Natural killer cell (primary cell): ENCODE measurements at regions of chr17 and their contacts with region 1.

Region 1: GRCh38 chr17:31321481-31321880 is at the start of gene EVI2A:
- DNase-seq: peak; percentile 54 to 93
- ATAC-seq: peak; percentile 88 to 95 (median 92)
- H3K4me3 ChIP-seq: peak within 1 kb of the TSS; percentile 75
- H3K4me3 Mint-ChIP-seq: peak within 1 kb of the TSS; percentile 80
- H3K27ac ChIP-seq: peak within 1 kb of the TSS; percentile 93
- H3K27ac Mint-ChIP-seq: peak within 1 kb of the TSS; percentile 89 to 93
- H3K4me1 ChIP-seq: peaks cover 9% of the 10 kb centered on the region
- H3K4me1 Mint-ChIP-seq: peaks cover 33 to 37% of the 10 kb centered on the region in 2 donors
- H3K27me3 ChIP-seq: no peaks in the 10 kb centered on the region
- H3K27me3 Mint-ChIP-seq: no peaks in the 10 kb centered on the region
- CTCF ChIP-seq: no peak
- total RNA-seq, gene EVI2A: 20.9 to 33.0 (median 32.4) TPM

Region 2: DNA sequence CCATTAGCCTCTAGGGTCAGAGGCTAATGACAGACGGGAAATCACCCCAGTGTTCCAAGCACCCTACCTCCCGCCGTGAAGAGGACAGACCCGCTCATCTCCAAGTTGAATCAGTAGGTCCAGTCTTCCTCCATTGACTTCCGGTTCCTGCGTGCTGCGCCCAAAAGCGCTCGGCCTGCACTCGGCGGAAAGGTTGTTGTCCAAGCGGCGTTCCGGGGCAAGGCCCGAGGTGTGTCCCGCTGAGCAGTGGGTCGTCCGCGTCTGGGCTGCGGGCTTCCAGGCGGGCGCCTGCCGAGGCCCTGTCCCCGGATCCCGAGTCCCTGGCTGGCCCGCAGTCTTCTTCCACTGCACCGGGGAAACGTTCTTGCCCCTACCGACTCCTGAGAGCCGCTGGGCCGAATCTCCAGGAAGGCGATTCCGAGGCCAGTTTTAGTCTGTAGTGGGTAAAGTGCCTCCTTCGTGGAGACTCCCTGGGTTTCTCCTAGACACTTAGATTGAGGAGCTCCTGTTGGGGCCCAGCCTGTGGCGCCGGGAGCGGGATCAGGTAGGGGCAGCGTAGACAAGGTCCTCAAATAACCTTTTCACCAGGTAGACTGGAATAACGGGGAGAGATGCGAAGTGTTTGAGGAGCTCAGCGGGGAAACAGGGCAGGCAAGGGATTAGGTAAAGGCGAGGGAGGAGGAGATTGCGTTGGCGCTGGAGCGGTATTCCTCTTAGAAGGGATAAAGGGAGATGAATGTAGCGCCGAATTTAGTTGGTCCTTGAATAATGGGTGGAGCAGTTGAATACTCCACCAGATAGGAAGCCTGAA is 415.2 kb before region 1 on chr17 and contains the start of gene TEFM:
- intact Hi-C with region 1: no loop called
- DNase-seq: peak; percentile 89 to 91
- ATAC-seq: peak; percentile 98
- H3K4me3 ChIP-seq: peak within 1 kb of the TSS; percentile 57
- H3K4me3 Mint-ChIP-seq: peak within 1 kb of the TSS; percentile 98
- H3K27ac ChIP-seq: peak within 1 kb of the TSS; percentile 76
- H3K27ac Mint-ChIP-seq: peak within 1 kb of the TSS; percentile 93 to 94
- H3K4me1 ChIP-seq: peaks cover 20% of the 10 kb centered on the region
- H3K4me1 Mint-ChIP-seq: peaks cover 29 to 34% of the 10 kb centered on the region in 2 donors
- H3K27me3 ChIP-seq: no peaks in the 10 kb centered on the region
- H3K27me3 Mint-ChIP-seq: no peaks in the 10 kb centered on the region
- CTCF ChIP-seq: no peak
- total RNA-seq, gene TEFM: 6.3 to 12.9 (median 10.5) TPM

Region 3: DNA sequence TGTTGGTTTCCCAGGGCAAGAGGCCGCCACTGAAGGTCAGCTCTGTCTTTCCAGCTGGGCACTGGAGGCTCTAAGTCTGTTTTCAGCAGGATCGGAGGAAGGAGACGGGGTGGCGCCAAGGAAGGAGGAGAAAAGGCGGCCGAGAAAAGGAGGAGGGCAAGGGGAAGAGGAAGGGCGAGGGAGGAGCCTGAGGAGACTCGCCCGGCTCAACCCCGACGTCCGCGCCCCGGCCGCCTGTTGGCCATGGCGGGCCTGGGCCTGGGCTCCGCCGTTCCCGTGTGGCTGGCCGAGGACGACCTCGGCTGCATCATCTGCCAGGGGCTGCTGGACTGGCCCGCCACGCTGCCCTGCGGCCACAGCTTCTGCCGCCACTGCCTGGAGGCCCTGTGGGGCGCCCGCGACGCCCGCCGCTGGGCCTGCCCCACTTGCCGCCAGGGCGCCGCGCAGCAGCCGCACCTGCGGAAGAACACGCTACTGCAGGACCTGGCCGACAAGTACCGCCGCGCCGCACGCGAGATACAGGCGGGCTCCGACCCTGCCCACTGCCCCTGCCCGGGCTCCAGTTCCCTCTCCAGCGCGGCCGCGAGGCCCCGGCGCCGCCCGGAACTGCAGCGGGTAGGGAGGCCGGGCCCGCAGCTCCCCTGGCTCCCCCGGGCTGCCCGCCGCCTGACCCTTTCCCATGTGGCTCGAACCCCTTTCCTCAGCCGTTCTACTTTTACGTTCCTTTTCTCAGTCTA is 350.5 kb before region 1 on chr17 and contains the start of gene RNF135:
- intact Hi-C with region 1: loop called (anchors 10 kb)
- DNase-seq: peak; percentile 52 to 73
- ATAC-seq: peak; percentile 55 to 82 (median 72)
- H3K4me3 ChIP-seq: peak within 1 kb of the TSS; percentile 66
- H3K4me3 Mint-ChIP-seq: peak within 1 kb of the TSS; percentile 99
- H3K27ac ChIP-seq: peak within 1 kb of the TSS; percentile 80
- H3K27ac Mint-ChIP-seq: peak within 1 kb of the TSS; percentile 87 to 96
- H3K4me1 ChIP-seq: peaks cover 45% of the 10 kb centered on the region
- H3K4me1 Mint-ChIP-seq: peaks cover 34 to 41% of the 10 kb centered on the region in 2 donors
- H3K27me3 ChIP-seq: no peaks in the 10 kb centered on the region
- H3K27me3 Mint-ChIP-seq: no peaks in the 10 kb centered on the region
- CTCF ChIP-seq: no peak
- total RNA-seq, gene RNF135: 8.8 to 13.5 (median 11.7) TPM

Region 4: GRCh38 chr17:31494259-31495021 is 173.0 kb after region 1 on chr17:
- intact Hi-C with region 1: loop called (anchors 5 kb)
- DNase-seq: peak; percentile 58 to 87
- ATAC-seq: peak; percentile 83 to 89 (median 87)
- H3K4me3 ChIP-seq: no peak overlapping the region
- H3K4me3 Mint-ChIP-seq: peak overlapping the region; percentile 71
- H3K27ac ChIP-seq: peak overlapping the region; percentile 89
- H3K27ac Mint-ChIP-seq: peak overlapping the region; percentile 92 to 97
- H3K4me1 ChIP-seq: peaks cover 94% of the 10 kb centered on the region
- H3K4me1 Mint-ChIP-seq: peaks cover 82 to 93% of the 10 kb centered on the region in 2 donors
- H3K27me3 ChIP-seq: no peaks in the 10 kb centered on the region
- H3K27me3 Mint-ChIP-seq: no peaks in the 10 kb centered on the region
- CTCF ChIP-seq: no peak

Region 5: DNA sequence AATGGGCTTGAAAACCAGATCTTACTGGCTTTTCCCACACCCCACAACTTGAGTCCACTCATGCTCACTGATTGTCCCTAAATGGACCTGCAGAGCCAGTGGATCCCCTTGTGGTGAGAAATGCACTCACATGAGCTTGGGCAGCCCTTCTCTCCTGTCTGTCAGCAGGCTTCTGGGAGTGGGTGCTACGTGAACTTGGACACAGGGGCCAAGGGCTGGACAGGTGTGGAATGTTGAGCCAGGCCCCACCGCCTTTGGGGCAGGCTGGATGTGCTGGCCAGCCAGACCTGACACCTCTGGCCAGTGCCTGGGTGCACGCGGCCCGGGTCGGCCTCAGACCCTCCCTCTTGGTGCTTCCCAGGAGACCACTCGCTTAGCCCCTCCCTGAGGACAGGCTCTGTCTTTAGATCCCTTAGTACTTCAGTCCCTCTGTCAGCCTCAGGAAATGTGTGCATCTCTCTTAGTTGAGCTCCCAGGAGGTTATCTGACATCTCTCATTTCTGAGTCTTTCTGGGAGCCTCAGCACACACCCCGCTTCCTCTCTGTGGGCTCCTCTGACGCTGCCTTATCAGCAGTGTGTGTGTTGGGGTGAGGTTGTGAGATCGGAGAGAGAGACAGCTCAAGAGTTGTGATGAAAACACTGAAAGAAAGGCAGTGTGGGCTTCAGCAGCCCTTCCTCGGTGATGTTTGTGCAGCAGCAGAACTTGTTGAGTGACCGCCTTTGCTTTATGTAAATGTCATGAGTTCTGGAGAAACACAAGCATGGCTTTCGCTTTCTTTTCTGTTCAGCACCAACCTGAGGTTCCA is 187.0 kb after region 1 on chr17:
- intact Hi-C with region 1: loop called (anchors 5 kb)
- DNase-seq: peak; percentile 64 to 92
- ATAC-seq: peak; percentile 84 to 97 (median 90)
- H3K4me3 ChIP-seq: peak overlapping the region; percentile 27
- H3K4me3 Mint-ChIP-seq: peak overlapping the region; percentile 95
- H3K27ac ChIP-seq: peak overlapping the region; percentile 96
- H3K27ac Mint-ChIP-seq: peak overlapping the region; percentile 96 to 97
- H3K4me1 ChIP-seq: peaks cover 69% of the 10 kb centered on the region
- H3K4me1 Mint-ChIP-seq: peaks cover 60 to 68% of the 10 kb centered on the region in 2 donors
- H3K27me3 ChIP-seq: no peaks in the 10 kb centered on the region
- H3K27me3 Mint-ChIP-seq: no peaks in the 10 kb centered on the region
- CTCF ChIP-seq: peak; percentile 48